ENCODE measurements at regions of chr7 and their contacts with region 1.

Region 1: DNA sequence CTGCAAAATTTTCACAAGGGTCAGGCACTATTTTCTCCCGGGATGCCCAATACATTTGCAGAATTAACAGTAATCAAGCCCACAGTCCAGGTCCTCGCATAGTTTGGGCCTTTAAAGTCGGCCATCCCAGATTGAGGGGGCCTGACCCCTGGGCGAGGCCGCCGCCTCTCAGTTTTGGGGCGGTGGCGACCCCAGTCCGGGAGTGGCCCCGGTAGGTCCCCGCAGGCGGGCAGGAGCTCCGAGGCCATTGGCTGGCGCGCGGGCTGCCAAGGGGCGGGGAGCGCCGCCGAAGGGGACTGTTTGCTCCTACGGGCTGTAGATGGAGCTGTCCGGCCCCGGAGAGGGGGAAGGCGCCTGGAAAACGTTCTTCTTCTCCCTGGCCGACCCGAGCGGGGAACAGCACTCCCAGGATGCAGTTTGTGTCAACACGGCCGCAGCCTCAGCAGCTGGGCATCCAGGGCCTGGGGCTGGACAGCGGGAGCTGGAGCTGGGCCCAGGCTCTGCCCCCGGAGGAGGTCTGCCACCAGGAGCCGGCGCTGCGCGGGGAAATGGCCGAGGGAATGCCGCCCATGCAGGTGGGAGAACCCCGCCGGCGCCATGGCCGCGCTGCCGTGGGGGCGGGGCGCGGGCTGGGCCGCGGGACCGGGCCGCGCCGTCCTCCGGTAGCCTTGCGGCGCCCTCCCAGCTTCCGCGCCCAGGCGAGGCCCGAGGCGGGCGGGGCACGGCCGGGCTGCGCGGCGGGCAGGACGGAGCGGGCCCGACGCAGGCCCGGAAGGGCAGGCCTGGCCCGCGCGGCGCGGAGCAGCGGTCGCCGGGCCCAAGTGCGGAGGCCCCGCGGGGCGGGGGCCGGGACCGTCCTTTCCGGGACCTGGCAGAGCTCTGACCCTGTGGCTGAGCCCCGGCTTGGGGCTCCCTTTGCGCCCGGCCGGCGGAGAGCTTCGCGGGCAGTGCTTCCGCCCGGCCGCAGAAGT is at the start of gene ZNF282:
- DNase-seq: peak; percentile 43 to 84 (median 56)
- ATAC-seq: peak; percentile 91
- H3K4me3 ChIP-seq: peak within 1 kb of the TSS; percentile 82
- H3K4me3 Mint-ChIP-seq: peak within 1 kb of the TSS; percentile 83 to 94 (median 90)
- H3K27ac ChIP-seq: peak within 1 kb of the TSS; percentile 77
- H3K27ac Mint-ChIP-seq: peak within 1 kb of the TSS; percentile 79 to 97 (median 86)
- H3K4me1 ChIP-seq: peaks cover 6 to 8% of the 10 kb centered on the region in 2 donors
- H3K4me1 Mint-ChIP-seq: peaks cover 20 to 52% (median 47%) of the 10 kb centered on the region in 7 donors
- H3K27me3 ChIP-seq: no peaks in the 10 kb centered on the region
- H3K27me3 Mint-ChIP-seq: peaks cover 0 to 3% (median 0%) of the 10 kb centered on the region in 5 donors
- total RNA-seq, gene ZNF282: 12.1 to 36.7 (median 15.1) TPM

Region 2: DNA sequence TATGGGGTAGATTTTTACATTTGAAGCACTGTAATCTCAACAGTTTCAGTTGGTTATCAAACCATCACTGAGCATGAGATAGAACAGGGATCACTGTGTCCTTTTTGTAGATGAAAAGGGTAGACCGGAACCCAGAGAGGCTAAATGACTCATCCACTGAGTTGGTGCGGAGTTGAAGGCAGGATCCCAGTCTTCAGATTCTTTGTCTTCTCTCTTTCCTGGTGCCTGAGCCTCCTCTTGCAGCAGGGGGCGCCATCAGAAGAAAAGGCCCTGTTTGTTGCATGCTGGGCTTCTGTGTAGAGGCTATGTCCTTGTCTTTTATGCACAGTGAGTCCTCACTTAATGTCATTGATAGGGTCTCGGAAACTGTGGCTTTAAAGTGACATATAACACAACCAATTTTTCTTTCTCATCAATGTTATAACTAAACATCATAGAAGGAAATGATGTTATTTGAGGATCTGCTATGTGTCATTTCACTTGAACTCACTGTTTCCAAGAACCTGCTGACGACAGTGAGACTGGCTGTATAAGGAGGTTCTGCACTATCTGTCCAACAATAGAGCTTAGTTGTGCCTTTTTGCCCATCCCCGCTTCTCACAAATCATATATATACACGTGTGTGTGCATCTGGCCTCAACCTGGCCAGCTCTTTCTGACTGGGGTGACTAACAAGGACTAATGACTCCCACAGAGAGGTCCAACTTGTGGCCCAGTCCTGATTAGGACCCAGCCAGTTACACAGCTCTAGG is 14.2 kb after region 1 on chr7:
- CTCF ChIA-PET with region 1: interaction called, 3 read pairs
- POLR2A ChIA-PET with region 1: no interaction called
- intact Hi-C with region 1: loop called in 1 of 2 experiments (anchors 1 kb)
- DNase-seq: peak; percentile 18 to 74 (median 48)
- ATAC-seq: peak; percentile 73
- H3K4me3 ChIP-seq: no peak overlapping the region
- H3K4me3 Mint-ChIP-seq: peak overlapping the region in 1 of 10 donors; percentile 60
- H3K27ac ChIP-seq: no peak overlapping the region
- H3K27ac Mint-ChIP-seq: peak overlapping the region in 3 of 9 donors; percentile 6 to 79 (median 72)
- H3K4me1 ChIP-seq: no peaks in the 10 kb centered on the region
- H3K4me1 Mint-ChIP-seq: peaks cover 0 to 21% (median 5%) of the 10 kb centered on the region in 7 donors
- H3K27me3 ChIP-seq: no peaks in the 10 kb centered on the region
- H3K27me3 Mint-ChIP-seq: no peaks in the 10 kb centered on the region

Region 3: DNA sequence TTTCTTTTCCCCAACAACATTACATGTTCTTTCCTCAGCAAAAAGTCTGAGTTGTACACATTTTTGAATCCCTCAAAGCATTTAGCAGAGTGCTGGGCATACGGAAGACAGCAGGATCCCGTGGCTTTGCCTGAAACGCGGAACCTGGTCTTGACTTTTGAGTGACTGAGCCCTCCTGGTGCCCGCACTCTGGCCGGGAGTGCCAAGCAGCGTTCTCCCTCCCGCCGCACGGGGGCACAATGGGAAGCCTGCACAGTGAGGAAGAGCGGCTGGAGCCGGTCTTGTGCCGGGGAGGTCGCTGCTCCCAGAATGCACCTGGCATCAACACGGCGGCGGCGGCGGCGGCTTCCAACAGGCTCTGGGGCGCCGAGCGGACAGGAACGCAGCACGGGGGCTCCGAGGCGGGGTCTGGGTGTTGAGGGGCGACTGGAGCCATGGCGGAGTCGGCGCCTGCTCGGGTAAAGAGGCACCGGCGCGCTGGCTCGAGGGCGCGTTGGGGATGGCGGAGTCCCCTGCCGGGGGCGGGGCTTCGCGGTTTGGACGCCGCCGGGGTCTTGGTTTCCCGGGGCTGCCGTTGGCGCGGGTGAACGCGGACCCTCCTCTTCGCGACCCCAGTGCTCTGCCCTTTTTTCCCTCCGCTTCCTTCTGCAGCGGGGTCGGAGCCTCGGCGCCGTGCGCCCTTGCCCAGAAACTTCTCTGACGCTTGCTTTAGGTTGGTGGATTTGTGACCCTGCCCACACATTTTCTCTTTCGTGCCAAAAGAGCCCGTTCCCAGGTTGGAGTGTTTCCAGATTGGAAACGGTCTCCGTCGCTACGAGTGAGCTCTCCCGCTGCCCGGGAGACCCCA is 44.1 kb after region 1 on chr7 and contains the start of gene ZNF212:
- CTCF ChIA-PET with region 1: no interaction called
- POLR2A ChIA-PET with region 1: no interaction called
- intact Hi-C with region 1: loop called (anchors 1 to 5 kb)
- DNase-seq: peak; percentile 75 to 89 (median 84)
- ATAC-seq: peak; percentile 100
- H3K4me3 ChIP-seq: peak within 1 kb of the TSS; percentile 90
- H3K4me3 Mint-ChIP-seq: peak within 1 kb of the TSS; percentile 85 to 95 (median 92)
- H3K27ac ChIP-seq: peak within 1 kb of the TSS; percentile 76
- H3K27ac Mint-ChIP-seq: peak within 1 kb of the TSS; percentile 71 to 89 (median 87)
- H3K4me1 ChIP-seq: peaks cover 14 to 16% of the 10 kb centered on the region in 2 donors
- H3K4me1 Mint-ChIP-seq: peaks cover 23 to 43% (median 33%) of the 10 kb centered on the region in 7 donors
- H3K27me3 ChIP-seq: no peaks in the 10 kb centered on the region
- H3K27me3 Mint-ChIP-seq: peaks cover 0 to 6% (median 0%) of the 10 kb centered on the region in 5 donors
- total RNA-seq, gene ZNF212: 10.4 to 20.6 (median 13.3) TPM

Region 4: DNA sequence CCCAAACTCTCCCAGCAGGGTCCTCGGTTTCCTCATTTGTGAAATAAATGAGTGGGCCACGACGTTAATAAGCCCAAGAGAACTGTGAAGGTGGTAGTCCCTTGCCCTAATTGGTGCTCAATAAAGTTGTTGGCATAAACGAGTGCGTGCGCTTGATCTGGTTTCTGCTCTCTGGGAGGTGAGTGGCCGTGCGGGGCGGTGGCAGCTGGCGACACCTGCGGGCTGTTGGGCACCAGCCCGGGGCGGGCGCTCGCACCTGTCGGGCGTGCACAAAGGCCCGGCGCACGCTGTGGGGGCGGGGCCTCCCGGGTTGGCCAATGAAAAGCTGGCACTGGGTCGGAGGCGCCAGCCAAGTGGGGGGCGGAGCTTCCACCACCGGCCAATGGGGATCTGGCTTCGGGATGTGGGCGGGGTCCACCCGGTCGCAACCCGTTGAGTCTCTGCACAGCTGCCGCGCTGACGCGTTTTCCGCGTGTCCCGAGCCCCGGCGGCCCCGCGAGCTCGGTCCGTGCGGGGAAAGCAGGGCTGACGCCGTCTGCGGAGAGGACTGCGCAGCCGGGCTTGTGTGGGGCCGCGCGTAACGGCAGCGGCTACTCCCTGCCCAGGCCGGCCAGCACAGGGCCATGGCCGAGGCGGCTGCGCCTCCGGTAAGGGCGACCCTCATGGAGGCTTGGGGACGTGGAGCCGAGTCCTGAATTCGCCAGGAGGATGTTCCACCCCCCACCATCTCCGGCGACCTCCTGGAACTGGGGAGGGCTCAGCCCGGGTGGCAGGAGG is 89.6 kb after region 1 on chr7:
- CTCF ChIA-PET with region 1: no interaction called
- POLR2A ChIA-PET with region 1: no interaction called
- intact Hi-C with region 1: loop called (anchors 1 to 2 kb)
- DNase-seq: peak; percentile 96 to 99 (median 98)
- ATAC-seq: peak; percentile 98
- H3K4me3 ChIP-seq: peak overlapping the region; percentile 80
- H3K4me3 Mint-ChIP-seq: peak overlapping the region; percentile 79 to 97 (median 92)
- H3K27ac ChIP-seq: peak overlapping the region; percentile 72
- H3K27ac Mint-ChIP-seq: peak overlapping the region; percentile 76 to 96 (median 93)
- H3K4me1 ChIP-seq: peaks cover 30 to 36% of the 10 kb centered on the region in 2 donors
- H3K4me1 Mint-ChIP-seq: peaks cover 26 to 55% (median 46%) of the 10 kb centered on the region in 7 donors
- H3K27me3 ChIP-seq: no peaks in the 10 kb centered on the region
- H3K27me3 Mint-ChIP-seq: no peaks in the 10 kb centered on the region